ENCODE measurements at regions of chr7 and their contacts with region 1.

Region 1: DNA sequence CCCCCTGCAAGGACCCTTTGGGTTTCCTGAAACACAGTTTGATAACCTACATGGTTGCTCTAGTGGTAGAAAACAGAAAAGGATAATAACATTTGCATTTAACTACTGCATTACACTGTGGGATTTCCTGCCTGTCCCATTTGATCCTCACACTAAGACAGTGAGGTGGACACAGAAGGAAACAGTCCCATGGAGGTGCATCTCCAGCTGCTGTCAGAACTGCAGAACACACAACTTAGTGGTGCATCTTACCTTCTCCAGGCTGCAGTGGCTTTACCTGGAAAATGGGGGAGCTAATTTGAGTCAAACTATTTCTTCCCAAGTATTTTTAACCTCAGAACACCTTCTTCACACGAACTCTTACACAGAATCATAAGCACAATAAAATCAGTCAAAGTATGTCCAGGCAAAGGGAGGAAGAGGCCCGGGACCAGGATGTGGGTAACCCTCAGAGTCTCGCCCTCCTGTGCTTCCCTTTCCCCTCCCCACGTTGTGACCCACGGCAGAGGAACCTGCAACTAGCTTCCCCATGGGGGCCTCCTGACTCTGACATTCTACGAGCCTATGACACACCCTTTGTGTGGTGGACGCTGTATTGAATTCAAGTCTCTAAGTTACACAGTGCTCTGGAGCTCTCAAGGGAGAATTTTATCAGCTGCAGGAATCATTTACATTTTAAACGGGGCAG is 33.7 kb downstream of the SCRN1 start:
- DNase-seq: no peak
- ATAC-seq: peak in 2 of 8 donors; percentile 36 to 40
- H3K4me3 ChIP-seq: no peak overlapping the region
- H3K27ac ChIP-seq: peak overlapping the region in 3 of 10 donors; percentile 54 to 69 (median 69)
- H3K4me1 ChIP-seq: peaks cover 0 to 31% (median 0%) of the 10 kb centered on the region in 9 donors
- H3K27me3 ChIP-seq: no peaks in the 10 kb centered on the region
- CTCF ChIP-seq: no peak

Region 2: DNA sequence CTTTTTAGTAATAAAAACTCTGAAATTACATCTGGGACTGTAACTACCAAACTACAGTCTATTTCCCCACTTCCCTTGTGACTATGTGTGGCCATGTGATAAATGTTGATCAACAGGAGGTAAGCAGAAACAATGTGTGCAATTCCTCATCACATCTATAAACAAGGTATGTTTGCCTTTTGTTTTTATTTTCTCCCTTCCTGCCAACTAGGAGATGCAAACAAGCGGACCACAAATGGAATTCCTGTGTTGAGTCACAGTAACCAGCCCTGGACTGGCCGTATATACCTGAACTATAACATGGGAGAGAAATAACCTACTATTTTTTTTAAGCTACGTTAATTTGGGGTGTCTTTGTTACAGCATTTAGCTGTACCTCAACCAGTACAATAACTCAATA is 18.8 kb before region 1 on chr7:
- intact Hi-C with region 1: loop called in 1 of 10 experiments (anchors 2 kb)
- DNase-seq: no peak
- ATAC-seq: no peak
- H3K4me3 ChIP-seq: no peak overlapping the region
- H3K27ac ChIP-seq: no peak overlapping the region
- H3K4me1 ChIP-seq: no peaks in the 10 kb centered on the region
- H3K27me3 ChIP-seq: no peaks in the 10 kb centered on the region
- CTCF ChIP-seq: no peak

Measured in heart right ventricle (tissue), 16 donors.